ENCODE measurements at regions of chr16 and their contacts with region 1.

Region 1: GRCh38 chr16:69150146-69150865 is 17.9 kb downstream of the UTP4 start:
- DNase-seq: no peak
- ATAC-seq: peak; percentile 83
- H3K4me3 ChIP-seq: no peak overlapping the region
- H3K27ac ChIP-seq: no peak overlapping the region
- H3K4me1 ChIP-seq: no peaks in the 10 kb centered on the region
- H3K27me3 ChIP-seq: no peaks in the 10 kb centered on the region

Region 2: DNA sequence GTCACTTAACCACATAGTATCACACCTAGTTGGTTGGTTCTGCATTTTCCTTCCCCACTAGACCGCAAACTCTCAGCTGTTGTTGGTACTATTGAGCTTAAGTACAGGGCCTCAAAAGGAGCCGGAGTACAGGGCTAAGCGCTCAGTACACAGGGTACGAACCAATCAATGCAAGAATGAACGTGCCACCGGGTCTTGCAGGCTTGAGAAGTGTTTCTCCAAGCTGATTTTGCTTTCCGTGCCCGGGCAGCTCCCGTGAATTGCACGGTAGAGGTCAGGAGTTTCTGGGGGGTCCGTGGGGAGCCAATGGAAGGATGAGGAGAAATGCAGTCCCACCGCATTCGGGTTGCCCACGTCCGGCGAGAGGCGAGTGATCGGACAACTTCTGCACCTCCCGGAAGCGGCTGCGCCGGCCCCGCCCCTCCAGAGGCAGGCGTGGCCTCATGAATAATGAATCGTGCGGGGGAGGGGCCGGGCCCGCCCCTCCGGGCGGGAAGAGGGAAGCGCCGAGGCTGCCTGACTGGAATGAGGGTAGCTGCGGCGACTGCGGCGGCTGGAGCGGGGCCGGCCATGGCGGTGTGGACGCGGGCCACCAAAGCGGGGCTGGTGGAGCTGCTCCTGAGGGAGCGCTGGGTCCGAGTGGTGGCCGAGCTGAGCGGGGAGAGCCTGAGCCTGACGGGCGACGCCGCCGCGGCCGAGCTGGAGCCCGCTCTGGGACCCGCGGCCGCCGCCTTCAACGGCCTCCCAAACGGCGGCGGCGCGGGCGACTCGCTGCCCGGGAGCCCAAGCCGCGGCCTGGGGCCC is 36.5 kb after region 1 on chr16 and contains the start of gene SNTB2:
- intact Hi-C with region 1: loop called in 1 of 2 experiments (anchors 1 kb)
- DNase-seq: peak; percentile 96 to 97
- ATAC-seq: peak; percentile 96
- H3K4me3 ChIP-seq: peak within 1 kb of the TSS; percentile 58 to 88
- H3K27ac ChIP-seq: peak within 1 kb of the TSS; percentile 78 to 91
- H3K4me1 ChIP-seq: peaks cover 0 to 4% of the 10 kb centered on the region in 2 donors
- H3K27me3 ChIP-seq: no peaks in the 10 kb centered on the region
- total RNA-seq, gene SNTB2: 49.6 to 67.1 TPM

Region 3: GRCh38 chr16:69286941-69287713 is 136.8 kb after region 1 on chr16:
- intact Hi-C with region 1: loop called (anchors 2 kb)
- DNase-seq: peak; percentile 75 to 84
- ATAC-seq: peak; percentile 83
- H3K4me3 ChIP-seq: no peak overlapping the region
- H3K27ac ChIP-seq: no peak overlapping the region
- H3K4me1 ChIP-seq: peaks cover 0 to 2% of the 10 kb centered on the region in 2 donors
- H3K27me3 ChIP-seq: no peaks in the 10 kb centered on the region